Activated CD4-positive, alpha-beta T cell treated with anti-CD3 and anti-CD28 coated beads for 36 hours (primary cell): ENCODE measurements at regions of chr11 and their contacts with region 1.

Region 1: GRCh38 chr11:74791333-74792100 is 42.9 kb downstream of the RNF169 start:
- DNase-seq: no peak
- ATAC-seq: no peak
- H3K4me3 Mint-ChIP-seq: no peak overlapping the region
- H3K27ac Mint-ChIP-seq: no peak overlapping the region
- H3K4me1 Mint-ChIP-seq: no peaks in the 10 kb centered on the region
- H3K27me3 Mint-ChIP-seq: no peaks in the 10 kb centered on the region

Region 2: GRCh38 chr11:74780248-74781005 is 11.1 kb before region 1 on chr11:
- CTCF ChIA-PET with region 1: interaction called, 11 read pairs
- POLR2A ChIA-PET with region 1: no interaction called
- intact Hi-C with region 1: no loop called
- DNase-seq: no peak
- ATAC-seq: no peak
- H3K4me3 Mint-ChIP-seq: no peak overlapping the region
- H3K27ac Mint-ChIP-seq: no peak overlapping the region
- H3K4me1 Mint-ChIP-seq: peaks cover 34% of the 10 kb centered on the region
- H3K27me3 Mint-ChIP-seq: no peaks in the 10 kb centered on the region

Region 3: DNA sequence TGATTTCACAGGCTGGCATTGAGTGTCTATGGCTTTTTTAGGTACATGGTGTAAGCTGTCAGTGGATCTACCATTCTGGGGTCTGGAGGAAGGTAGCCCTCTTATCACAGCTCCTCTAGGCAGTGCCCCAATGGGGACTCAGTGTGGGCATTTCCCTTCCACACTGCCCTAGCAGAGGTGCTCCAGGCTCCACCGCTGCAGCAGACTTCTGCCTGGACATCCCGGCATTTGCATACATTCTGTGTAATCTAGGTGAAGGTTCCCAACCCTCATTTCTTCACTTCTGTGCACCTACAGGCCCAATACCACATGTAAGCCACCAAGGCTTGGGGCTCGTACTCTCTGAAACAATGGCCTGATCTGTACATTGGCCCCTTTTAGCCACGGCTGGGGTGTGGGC is 35.4 kb after region 1 on chr11:
- CTCF ChIA-PET with region 1: no interaction called
- POLR2A ChIA-PET with region 1: no interaction called
- intact Hi-C with region 1: no loop called
- DNase-seq: peak; percentile 19
- ATAC-seq: no peak
- H3K4me3 Mint-ChIP-seq: no peak overlapping the region
- H3K27ac Mint-ChIP-seq: no peak overlapping the region
- H3K4me1 Mint-ChIP-seq: no peaks in the 10 kb centered on the region
- H3K27me3 Mint-ChIP-seq: no peaks in the 10 kb centered on the region